Activated CD4-positive, alpha-beta memory T cell treated with anti-CD3 and anti-CD28 coated beads, Interleukin-2, amount 10 ng/mL, durations not matched to agents 7 days and 5 days (primary cell): ENCODE measurements at regions of chr1 and their contacts with region 1.

Region 1: DNA sequence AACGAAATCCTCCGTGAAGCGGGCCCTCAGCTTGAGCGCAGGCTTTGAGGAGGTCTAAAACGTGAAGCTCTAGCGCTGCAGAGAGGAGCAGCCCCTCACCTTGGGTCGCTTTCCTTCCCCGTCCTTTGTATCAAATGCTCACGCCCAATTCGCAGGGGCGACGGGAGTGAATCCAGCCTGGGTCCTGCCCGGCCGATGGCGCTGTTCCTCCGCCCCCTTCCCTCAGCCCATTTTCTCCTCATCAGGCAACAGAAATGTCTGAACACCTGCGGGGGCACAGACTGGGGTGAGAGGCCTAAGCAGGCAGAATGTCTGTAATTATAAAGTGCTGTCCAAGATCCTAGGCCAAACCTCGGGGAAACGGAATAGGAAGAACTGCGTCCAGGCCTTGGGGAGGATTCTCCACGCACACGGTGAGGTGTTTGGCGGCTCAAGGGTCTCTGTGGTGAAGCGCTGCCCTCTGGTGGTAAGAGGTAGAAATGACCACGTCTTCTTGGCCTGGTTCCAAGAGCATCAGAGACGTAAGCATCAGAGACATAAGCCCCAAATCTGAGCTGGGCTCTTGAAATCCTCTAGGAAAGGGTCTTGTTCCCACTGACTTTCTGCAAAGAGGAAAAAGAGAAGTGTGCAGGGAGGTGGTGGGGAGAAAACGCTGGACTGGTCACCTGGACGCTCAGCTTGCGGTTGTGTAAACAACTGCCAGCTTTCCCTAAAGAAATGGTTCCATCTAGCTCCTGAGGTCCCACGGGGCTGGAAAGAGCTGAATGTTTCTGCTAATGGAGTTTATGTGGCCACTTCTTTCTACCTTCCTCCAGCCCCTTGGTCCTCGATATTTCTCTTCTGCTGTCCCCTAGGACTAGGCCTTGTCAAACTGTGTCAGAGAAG is 92.1 kb upstream of the CD53 start:
- DNase-seq: peak; percentile 80
- H3K4me3 Mint-ChIP-seq: no peak overlapping the region
- H3K27ac Mint-ChIP-seq: no peak overlapping the region
- H3K4me1 Mint-ChIP-seq: peaks cover 35% of the 10 kb centered on the region
- H3K27me3 Mint-ChIP-seq: peaks cover 3% of the 10 kb centered on the region

Region 2: DNA sequence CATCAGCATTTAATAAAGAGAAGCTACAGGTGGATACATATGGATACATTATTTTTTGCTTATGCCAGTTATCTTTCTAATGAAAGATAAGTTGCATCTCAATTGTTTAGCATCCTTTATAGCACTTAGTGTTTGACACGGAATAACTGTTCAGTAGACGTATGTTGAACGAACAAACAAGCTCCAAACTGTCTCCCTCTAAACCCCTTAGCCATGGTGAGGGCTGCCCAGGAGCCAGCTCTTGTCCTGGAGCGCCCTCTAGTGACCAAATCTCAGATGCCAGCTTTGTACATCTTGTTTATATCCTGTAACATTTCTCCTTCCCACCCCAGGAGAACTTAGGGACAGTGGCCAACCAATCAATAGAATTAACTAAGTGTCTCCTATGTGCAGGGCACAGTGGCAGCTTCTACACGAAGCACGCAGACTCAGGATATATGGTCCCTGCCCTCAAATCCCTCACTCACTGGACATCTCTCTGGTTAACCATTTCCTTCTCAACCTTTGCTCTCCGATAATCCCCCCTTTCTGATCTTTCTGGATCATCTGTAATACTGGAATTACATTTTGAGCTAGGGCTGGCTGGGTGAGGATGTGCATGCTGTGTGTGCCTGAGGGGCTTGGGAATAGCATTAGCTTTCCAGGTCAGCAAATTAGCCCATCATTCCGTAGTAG is 284.8 kb before region 1 on chr1:
- CTCF ChIA-PET with region 1: interaction called, 11 read pairs
- POLR2A ChIA-PET with region 1: no interaction called
- DNase-seq: peak; percentile 82
- H3K4me3 Mint-ChIP-seq: no peak overlapping the region
- H3K27ac Mint-ChIP-seq: no peak overlapping the region
- H3K4me1 Mint-ChIP-seq: peaks cover 4% of the 10 kb centered on the region
- H3K27me3 Mint-ChIP-seq: peaks cover 3% of the 10 kb centered on the region

Region 3: DNA sequence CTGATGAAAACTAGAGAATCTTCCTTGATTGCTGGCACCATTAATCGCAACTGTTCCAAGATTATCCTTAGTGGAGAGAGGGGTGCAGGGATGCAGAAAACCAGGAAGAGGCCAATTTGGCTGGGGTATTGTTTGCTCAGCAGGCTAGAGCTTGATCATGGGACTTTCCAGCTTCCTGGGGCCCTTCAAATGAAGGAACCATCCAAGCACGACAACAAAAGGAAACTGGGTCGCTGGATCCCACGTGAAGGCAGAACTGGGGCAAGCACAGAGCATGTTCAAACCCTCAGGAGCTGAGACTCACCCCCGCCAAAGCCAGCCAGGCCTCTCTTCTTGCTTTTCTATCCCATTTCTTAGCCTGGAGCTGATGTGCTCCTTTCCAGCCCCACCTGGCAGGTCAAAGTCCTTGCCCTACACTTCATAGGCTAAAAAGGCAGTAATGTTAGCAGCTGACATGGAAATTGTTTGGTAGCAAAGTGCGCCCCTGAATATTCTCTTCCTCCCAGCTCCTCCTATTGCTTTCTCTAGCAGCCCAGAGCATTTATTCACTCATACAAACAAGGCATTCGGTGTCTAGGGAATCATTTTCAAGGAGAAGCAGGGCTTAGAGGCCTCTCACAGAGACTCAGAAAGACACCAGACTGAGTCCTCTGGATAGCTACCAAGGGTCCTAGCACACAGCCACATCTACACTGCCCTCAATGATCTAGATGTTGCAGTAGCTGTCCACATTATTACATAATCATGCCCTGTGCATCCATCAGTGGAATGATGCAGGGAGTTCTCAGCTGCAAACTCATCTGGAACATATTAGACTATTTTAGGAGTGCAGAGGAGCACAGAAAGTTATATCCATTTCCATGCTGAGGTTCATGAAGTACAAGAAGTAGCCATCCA is 186.1 kb before region 1 on chr1:
- CTCF ChIA-PET with region 1: interaction called, 11 read pairs
- POLR2A ChIA-PET with region 1: no interaction called
- DNase-seq: no peak
- H3K4me3 Mint-ChIP-seq: no peak overlapping the region
- H3K27ac Mint-ChIP-seq: no peak overlapping the region
- H3K4me1 Mint-ChIP-seq: peaks cover 32% of the 10 kb centered on the region
- H3K27me3 Mint-ChIP-seq: peaks cover 2% of the 10 kb centered on the region

Region 4: DNA sequence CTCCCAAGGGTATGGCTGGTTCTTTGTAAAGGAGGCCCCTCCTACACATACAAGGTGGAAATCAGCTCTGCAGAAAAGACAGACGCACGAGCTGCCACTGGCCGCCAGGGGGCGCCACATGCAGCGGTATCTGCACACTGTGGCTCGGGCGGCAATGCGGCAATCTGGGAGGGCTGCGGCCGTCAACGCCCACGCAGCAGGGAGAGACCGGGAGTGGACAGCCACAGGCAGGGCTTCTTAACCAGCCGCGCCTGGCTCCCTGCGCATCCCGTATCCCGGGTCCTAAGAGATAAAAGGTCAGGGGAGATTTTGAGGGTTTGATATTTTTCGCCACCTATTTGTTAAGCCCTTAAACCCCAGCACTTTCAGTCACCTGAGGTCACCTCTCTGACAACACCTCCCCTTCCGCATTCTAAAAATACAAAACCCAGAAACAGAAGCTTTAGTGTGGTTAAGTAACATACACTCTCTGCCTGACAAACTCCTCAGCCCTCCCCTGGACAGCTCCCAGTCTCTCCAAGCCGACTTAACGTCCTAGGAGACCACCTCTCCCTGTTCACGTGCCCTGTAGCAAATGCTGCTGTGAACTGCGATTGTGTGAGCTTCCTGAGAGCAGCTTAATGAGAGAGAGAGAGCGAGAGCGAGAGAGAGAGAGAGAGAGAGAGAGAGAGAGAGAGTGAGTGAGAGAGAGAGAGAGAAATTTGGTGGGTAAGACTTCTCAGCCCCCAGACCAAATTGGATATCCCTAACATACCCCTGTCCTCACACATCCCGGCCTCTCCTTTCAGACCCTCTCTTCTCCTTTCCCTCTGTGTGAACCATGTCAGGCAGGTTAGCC is 161.2 kb before region 1 on chr1:
- CTCF ChIA-PET with region 1: interaction called, 135 read pairs
- POLR2A ChIA-PET with region 1: interaction called, 31 read pairs
- DNase-seq: peak; percentile 93
- H3K4me3 Mint-ChIP-seq: peak overlapping the region; percentile 74
- H3K27ac Mint-ChIP-seq: peak overlapping the region; percentile 83
- H3K4me1 Mint-ChIP-seq: peaks cover 60% of the 10 kb centered on the region
- H3K27me3 Mint-ChIP-seq: no peaks in the 10 kb centered on the region

Region 5: GRCh38 chr1:110674337-110675059 is 106.3 kb before region 1 on chr1 and contains the start of gene KCNA3:
- CTCF ChIA-PET with region 1: interaction called, 10 read pairs
- POLR2A ChIA-PET with region 1: interaction called, 31 read pairs
- DNase-seq: peak; percentile 74
- H3K4me3 Mint-ChIP-seq: peak within 1 kb of the TSS; percentile 100
- H3K27ac Mint-ChIP-seq: peak within 1 kb of the TSS; percentile 89
- H3K4me1 Mint-ChIP-seq: peaks cover 28% of the 10 kb centered on the region
- H3K27me3 Mint-ChIP-seq: no peaks in the 10 kb centered on the region
- total RNA-seq, gene KCNA3: 84.9 to 86.2 TPM

Region 6: DNA sequence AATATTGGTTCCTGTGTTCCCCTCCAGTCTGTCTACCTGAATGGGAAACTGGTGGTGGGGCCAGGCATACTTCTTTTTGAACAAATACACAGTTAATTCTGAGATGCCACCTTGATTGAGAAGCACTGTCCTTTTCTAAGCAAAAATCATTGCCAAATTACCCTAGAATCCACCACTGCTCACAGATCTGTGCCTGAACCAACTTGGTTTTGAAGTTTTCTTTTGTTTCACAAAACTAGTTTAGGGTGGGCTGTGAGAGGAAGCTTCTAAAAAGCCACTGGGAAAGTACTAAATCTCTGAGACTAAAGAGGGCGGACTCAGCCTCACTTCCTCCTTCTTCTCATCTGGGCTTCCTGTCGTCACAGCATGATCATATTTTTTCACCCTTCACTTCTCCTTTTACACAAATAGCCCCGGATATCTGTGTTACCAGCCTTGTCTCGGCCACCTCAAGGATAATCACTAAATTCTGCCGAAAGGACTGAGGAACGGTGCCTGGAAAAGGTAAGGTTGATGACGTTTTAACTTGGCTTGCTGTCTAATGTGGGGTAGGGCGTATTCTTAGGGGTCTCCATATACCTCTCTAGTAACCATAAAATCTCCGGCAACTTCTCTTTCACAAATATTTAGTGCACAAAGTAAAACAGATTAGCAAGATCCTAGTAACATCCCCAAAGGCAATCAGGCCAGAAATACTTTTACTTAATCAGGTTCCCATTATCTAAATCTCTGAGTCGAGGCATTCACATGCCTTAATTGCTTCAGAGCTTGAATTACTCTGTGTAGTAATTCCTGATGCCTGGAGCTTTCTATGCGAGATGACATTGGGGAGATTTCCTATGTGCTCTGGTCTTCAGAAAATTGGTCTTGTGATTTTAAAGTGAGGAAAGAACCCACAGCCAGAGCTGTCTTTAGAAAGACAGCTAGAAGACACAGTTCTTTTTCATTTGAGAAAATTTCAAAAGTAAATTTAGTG is 92.2 kb after region 1 on chr1 and contains the start of gene CD53:
- CTCF ChIA-PET with region 1: interaction called, 3 read pairs
- POLR2A ChIA-PET with region 1: interaction called, 170 read pairs
- DNase-seq: peak; percentile 64
- H3K4me3 Mint-ChIP-seq: peak within 1 kb of the TSS; percentile 97
- H3K27ac Mint-ChIP-seq: peak within 1 kb of the TSS; percentile 97
- H3K4me1 Mint-ChIP-seq: peaks cover 34% of the 10 kb centered on the region
- H3K27me3 Mint-ChIP-seq: no peaks in the 10 kb centered on the region
- total RNA-seq, gene CD53: 657 to 659 TPM

Region 7: DNA sequence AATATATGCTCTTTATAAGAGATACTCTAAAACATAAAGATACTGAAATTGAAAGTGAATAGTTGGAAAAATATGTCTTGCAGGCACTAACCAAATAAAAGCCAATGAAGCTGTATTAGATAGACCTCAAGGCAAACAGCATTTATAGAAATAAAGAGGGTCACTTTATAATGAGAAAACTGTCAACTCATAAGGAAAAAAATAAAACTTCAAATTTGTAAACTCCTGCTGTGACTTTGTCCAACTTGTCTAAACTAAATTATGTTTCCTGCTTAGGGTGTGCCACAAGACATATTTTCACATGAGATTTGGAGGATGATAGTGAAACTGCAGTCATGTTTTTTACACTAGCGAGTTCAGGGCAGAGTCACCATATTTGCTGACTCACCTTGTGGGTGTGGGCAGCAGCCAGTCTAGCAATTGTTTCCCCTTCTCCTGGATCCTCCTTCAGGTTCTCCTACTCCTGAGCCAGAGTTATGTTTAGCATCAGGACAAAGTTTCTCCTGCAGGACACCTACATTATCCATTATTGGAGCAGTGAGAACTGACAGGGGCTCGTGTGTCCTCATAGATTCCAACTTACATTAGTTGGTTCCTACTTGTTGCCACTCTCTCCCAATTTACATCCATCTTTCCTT is 135.9 kb after region 1 on chr1:
- CTCF ChIA-PET with region 1: no interaction called
- POLR2A ChIA-PET with region 1: no interaction called
- DNase-seq: peak; percentile 62
- H3K4me3 Mint-ChIP-seq: peak overlapping the region; percentile 49
- H3K27ac Mint-ChIP-seq: peak overlapping the region; percentile 70
- H3K4me1 Mint-ChIP-seq: peaks cover 20% of the 10 kb centered on the region
- H3K27me3 Mint-ChIP-seq: peaks cover 11% of the 10 kb centered on the region